ENCODE measurements at regions of chr17 and their contacts with region 1.

Region 1: DNA sequence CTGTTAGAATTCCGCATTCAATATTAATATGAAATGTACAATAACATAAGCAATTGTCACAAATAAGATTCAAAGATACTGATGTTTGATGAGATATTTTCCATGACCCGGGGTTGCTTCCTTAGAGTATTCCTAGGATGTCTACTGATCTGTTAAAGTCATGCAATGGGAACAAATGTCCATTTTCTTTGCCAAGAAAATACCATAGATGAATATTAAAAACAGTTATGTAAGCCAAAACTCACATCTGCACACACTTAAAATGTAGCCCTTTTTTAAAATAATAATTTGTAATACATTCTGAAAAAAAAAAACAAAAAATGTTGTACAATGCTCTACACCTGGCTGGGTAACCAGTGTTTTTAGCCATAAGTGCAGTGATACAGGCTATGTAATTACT is 259.4 kb upstream of the AXIN2 start:
- DNase-seq: no peak
- ATAC-seq: no peak
- H3K4me3 ChIP-seq: no peak overlapping the region
- H3K27ac ChIP-seq: peak overlapping the region; percentile 70
- H3K4me1 ChIP-seq: peaks cover 32% of the 10 kb centered on the region
- H3K27me3 ChIP-seq: no peaks in the 10 kb centered on the region
- CTCF ChIP-seq: no peak

Region 2: DNA sequence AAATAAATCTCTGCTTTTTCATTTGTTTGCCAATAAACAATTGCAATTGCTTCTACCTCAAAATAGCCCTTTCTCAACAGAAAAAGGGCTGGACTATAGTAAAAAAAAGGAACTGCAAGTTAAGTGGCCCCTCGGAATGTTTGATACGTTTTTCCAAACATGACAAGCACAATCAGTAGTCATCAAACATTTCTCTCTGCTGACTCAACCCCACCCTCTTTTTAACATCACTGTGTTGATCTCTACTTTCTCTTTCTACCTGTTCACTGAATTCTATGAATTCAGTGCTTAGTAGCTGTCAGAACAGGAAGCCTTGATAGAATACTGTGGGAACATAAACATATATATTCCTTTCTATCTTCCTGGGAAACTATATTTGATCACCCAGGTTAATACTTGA is 142.9 kb before region 1 on chr17:
- CTCF ChIA-PET with region 1: no interaction called
- POLR2A ChIA-PET with region 1: no interaction called
- intact Hi-C with region 1: no loop called
- DNase-seq: peak; percentile 74
- ATAC-seq: peak; percentile 60
- H3K4me3 ChIP-seq: no peak overlapping the region
- H3K27ac ChIP-seq: no peak overlapping the region
- H3K4me1 ChIP-seq: peaks cover 16% of the 10 kb centered on the region; the same call in 1 of the 2 replicates
- H3K27me3 ChIP-seq: no peaks in the 10 kb centered on the region
- CTCF ChIP-seq: no peak

Region 3: GRCh38 chr17:65855249-65855648 is 34.4 kb after region 1 on chr17:
- CTCF ChIA-PET with region 1: no interaction called
- POLR2A ChIA-PET with region 1: no interaction called
- intact Hi-C with region 1: loop called (anchors 2 kb)
- DNase-seq: peak; percentile 98
- ATAC-seq: peak; percentile 73
- H3K4me3 ChIP-seq: peak overlapping the region; percentile 10; the same call in 1 of the 2 replicates
- H3K27ac ChIP-seq: peak overlapping the region; percentile 88
- H3K4me1 ChIP-seq: peaks cover 47% of the 10 kb centered on the region
- H3K27me3 ChIP-seq: no peaks in the 10 kb centered on the region
- CTCF ChIP-seq: no peak

Region 4: DNA sequence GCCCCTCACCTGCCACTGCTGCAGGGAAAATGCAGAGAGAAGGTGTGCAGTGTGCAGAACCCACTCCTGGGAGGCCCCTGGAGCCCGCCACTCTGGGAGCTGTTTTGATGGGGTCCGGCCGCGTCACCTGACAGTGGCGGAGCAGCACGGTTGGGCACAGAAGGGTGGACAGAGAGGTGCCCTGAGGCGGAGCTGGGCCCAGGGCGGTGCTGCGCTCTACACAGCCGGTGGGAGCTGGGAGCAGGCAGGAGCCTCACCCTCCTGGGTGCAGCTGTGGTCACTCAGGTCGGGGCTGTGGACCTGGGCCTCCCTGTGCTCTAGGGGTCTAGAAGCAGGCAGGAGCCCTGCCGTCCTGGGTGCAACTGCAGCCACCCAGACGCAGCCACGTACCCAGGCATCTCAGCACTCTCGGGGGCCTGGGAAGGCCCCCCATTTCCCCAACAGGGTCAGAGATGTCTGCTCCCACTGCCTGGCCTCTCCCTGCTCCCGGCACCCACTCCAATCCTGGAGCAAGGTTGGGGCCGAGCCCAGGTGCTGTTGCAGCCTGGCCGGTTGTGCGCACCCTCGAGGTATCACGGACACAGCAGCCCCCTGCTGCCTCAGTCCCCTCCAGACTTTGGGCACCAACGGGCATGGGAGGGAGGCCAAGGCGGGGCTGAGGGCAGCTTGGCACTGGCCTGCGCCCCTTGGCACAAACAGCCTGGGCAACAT is 45.1 kb after region 1 on chr17:
- CTCF ChIA-PET with region 1: no interaction called
- POLR2A ChIA-PET with region 1: no interaction called
- intact Hi-C with region 1: no loop called
- DNase-seq: no peak
- ATAC-seq: no peak
- H3K4me3 ChIP-seq: no peak overlapping the region
- H3K27ac ChIP-seq: no peak overlapping the region
- H3K4me1 ChIP-seq: no peaks in the 10 kb centered on the region; the same call in 1 of the 2 replicates
- H3K27me3 ChIP-seq: no peaks in the 10 kb centered on the region
- CTCF ChIP-seq: no peak

Measured in PC-3 (cell line).